ENCODE measurements at regions of chr17 and their contacts with region 1.

Region 1: DNA sequence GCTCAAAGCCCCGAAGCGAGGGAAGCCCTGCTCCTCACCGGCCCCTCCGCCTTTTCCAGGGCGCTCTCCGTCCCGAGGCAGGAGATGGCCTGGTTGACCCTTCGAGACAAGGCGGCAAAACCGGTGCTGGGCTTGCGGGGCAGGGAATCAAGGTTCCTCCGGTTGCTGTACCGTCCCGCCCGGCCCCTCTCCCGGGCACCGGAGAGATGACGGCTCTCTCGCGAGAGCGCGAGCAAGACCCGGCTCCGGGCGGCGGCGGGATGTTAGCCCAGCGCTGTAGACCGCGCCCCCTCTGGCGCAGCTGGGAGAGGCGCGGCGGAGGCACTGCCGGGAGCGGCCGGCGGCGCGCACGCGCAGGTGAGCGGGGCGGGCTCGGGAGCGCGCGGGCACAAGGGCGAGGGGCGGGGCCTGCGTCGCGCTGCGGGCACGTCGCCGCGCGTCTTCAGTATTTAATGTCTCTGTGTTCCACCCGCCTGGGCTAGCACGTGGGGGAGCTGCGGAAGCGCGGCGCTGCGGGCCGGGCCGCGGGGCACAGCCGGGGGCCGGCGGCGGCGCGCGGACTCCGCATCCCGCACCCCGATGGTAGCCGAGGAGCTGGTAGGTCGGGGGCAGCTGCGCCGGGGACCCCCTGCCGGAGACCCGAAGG is at the start of gene AKAP1:
- DNase-seq: peak; percentile 95
- H3K4me3 ChIP-seq: peak within 1 kb of the TSS; percentile 45 to 99 (median 68)
- H3K27ac ChIP-seq: peak within 1 kb of the TSS; percentile 88
- H3K4me1 ChIP-seq: peaks cover 8% of the 10 kb centered on the region
- H3K27me3 ChIP-seq: peaks cover 0 to 1% of the 10 kb centered on the region in 2 experiments
- CTCF ChIP-seq: peak in 1 of 2 donors; percentile 29
- POLR2A ChIP-seq: peak; percentile 95
- total RNA-seq, gene AKAP1: 20.9 and 23.9 TPM in 2 replicates

Region 2: GRCh38 chr17:57114085-57114673 is 29.3 kb after region 1 on chr17:
- CTCF ChIA-PET with region 1: no interaction called
- POLR2A ChIA-PET with region 1: no interaction called
- dilution Hi-C with region 1: no loop called
- intact Hi-C with region 1: loop called (anchors 1 kb)
- DNase-seq: peak; percentile 32
- H3K4me3 ChIP-seq: no peak overlapping the region
- H3K27ac ChIP-seq: no peak overlapping the region
- H3K4me1 ChIP-seq: no peaks in the 10 kb centered on the region
- H3K27me3 ChIP-seq: no peaks in the 10 kb centered on the region
- CTCF ChIP-seq: peak; percentile 84
- POLR2A ChIP-seq: no peak

Measured in endothelial cell of umbilical vein (primary cell).